ENCODE measurements at regions of chr6 and their contacts with region 1.

Region 1: GRCh38 chr6:39865011-39865888 is 69.0 kb downstream of the MOCS1 start:
- DNase-seq: peak; percentile 79
- H3K4me3 Mint-ChIP-seq: no peak overlapping the region
- H3K27ac Mint-ChIP-seq: no peak overlapping the region
- H3K4me1 Mint-ChIP-seq: no peaks in the 10 kb centered on the region
- H3K27me3 Mint-ChIP-seq: peaks cover 12% of the 10 kb centered on the region

Region 2: DNA sequence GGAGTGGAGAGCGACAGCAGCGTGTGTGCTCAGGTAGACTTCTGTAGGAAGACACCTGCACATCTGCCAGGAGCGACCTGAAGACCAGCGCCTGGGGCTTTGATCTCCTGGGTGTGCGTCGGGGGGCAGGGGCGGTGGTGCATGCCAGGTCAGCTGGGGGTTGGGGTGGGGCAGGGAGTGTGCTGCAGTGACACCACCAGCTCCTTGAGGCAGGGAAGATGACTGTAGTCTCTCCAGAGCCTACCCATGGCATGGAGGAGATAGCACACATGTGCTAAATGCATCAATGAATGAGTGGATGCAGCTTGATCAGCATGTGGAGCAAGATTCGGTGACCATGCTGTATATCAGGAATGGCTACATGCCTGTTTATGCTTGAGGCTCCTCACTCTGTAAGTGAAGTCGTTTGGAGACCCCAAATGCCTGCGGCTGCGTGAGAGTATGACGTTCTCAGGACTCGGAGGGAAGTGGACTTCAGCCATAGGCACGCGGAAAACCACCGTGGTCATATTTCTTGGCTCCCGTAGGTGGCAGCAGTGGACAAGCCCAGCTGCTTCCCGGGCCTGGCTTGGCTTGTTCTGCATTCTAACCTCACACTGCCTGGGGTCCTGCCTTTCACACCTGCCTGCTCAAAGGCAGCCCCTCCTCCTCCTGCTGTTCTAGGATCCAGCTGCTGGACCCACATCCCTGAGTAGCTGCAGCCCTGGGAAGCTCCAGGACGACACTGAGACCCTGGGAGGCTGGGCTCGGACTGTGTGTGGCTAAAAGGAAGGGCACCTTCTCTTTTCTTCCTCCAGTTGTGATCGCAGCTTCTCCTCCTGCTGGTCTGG is 503.4 kb before region 1 on chr6:
- CTCF ChIA-PET with region 1: interaction called, 3 read pairs
- intact Hi-C with region 1: loop called (anchors 10 kb)
- DNase-seq: peak; percentile 65
- H3K4me3 Mint-ChIP-seq: no peak overlapping the region
- H3K27ac Mint-ChIP-seq: no peak overlapping the region
- H3K4me1 Mint-ChIP-seq: no peaks in the 10 kb centered on the region
- H3K27me3 Mint-ChIP-seq: peaks cover 9% of the 10 kb centered on the region